Activated naive CD4-positive, alpha-beta T cell treated with anti-CD3 and anti-CD28 coated beads for 36 hours (primary cell): ENCODE measurements at regions of chr18 and their contacts with region 1.

Region 1: DNA sequence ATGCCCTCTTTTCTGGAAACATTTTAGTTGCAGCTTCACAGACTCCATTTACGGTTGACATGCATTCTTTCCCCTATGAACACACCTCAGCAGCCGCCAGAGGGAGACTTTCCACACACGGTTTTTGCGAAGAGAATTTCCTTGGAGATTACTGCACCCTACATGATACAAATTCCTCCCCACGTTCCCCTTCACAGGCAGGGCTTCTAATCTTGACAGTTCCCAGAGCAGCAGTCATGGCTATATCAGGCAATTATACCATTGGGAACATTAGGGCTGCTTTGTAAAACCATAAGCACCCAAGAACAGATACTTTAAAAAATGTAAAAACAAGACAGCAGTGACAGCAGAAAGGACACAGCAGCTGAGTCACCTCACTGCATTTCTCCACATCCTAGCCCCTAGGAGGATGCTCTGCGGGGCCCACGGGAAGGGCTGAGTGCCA is 253.8 kb downstream of the TGIF1 start:
- DNase-seq: peak; percentile 57
- H3K4me3 Mint-ChIP-seq: no peak overlapping the region
- H3K27ac Mint-ChIP-seq: no peak overlapping the region
- H3K4me1 Mint-ChIP-seq: peaks cover 3% of the 10 kb centered on the region
- H3K27me3 Mint-ChIP-seq: peaks cover 32% of the 10 kb centered on the region

Region 2: DNA sequence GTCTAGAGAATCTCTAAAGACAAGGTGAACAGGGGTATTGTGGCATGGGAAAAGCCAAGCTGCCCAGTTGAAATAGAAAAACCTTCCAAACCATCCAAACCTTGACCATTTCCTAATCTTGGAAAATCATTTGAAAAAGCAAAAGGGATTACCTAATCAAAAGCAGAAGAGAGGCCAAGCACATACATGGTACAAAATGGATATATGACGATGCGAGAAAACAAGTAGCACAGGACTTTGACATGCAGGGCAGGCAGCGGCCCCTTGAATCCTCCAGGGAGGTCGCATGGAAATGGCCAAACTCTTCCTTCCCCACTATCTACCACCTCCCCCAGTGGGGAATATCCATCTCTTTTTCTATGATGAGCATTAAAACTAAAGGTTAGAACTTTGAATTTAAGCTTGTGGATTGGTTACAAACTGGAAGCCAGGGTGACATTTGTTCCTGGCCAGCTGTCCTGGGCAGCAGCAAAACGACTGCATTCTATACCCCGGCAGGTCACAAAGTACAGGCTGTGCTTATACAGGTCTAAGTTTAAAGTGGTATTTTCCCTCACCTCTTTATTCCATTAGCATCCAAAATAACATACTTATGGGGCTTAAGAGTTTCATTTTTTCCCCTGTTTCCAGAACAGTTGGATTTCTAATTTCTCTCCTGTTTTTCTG is 508.7 kb before region 1 on chr18:
- CTCF ChIA-PET with region 1: no interaction called
- intact Hi-C with region 1: no loop called
- DNase-seq: no peak
- H3K4me3 Mint-ChIP-seq: no peak overlapping the region
- H3K27ac Mint-ChIP-seq: no peak overlapping the region
- H3K4me1 Mint-ChIP-seq: no peaks in the 10 kb centered on the region
- H3K27me3 Mint-ChIP-seq: no peaks in the 10 kb centered on the region

Region 3: DNA sequence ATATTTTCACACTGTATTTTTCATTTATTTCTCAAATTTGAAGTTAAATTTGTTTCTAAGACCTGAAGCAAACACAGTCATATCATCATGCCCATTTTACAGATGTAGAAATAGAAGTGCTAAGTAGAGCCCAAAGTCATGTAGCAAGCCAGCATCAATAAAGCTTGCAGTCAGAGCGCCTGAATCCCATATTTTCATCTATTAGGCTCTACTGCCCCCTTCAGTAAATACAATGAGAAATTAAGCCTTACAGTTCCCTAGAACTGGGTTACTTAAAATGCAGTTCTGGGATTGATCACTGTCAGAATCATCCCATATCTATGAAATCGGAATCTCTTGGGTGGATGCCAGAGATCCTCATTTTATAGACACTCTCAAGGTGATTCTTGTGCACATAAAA is 166.1 kb after region 1 on chr18:
- CTCF ChIA-PET with region 1: interaction called, 4 read pairs
- intact Hi-C with region 1: loop called (anchors 2 kb)
- DNase-seq: no peak
- H3K4me3 Mint-ChIP-seq: no peak overlapping the region
- H3K27ac Mint-ChIP-seq: no peak overlapping the region
- H3K4me1 Mint-ChIP-seq: no peaks in the 10 kb centered on the region
- H3K27me3 Mint-ChIP-seq: peaks cover 16% of the 10 kb centered on the region

Region 4: GRCh38 chr18:4068552-4069158 is 364.9 kb after region 1 on chr18:
- CTCF ChIA-PET with region 1: no interaction called
- intact Hi-C with region 1: loop called (anchors 2 kb)
- DNase-seq: peak; percentile 53
- H3K4me3 Mint-ChIP-seq: no peak overlapping the region
- H3K27ac Mint-ChIP-seq: no peak overlapping the region
- H3K4me1 Mint-ChIP-seq: no peaks in the 10 kb centered on the region
- H3K27me3 Mint-ChIP-seq: peaks cover 9% of the 10 kb centered on the region

Region 5: GRCh38 chr18:5057386-5058348 is 1353.9 kb after region 1 on chr18:
- CTCF ChIA-PET with region 1: no interaction called
- intact Hi-C with region 1: loop called (anchors 2 kb)
- DNase-seq: peak; percentile 71
- H3K4me3 Mint-ChIP-seq: no peak overlapping the region
- H3K27ac Mint-ChIP-seq: no peak overlapping the region
- H3K4me1 Mint-ChIP-seq: peaks cover 20% of the 10 kb centered on the region
- H3K27me3 Mint-ChIP-seq: peaks cover 5% of the 10 kb centered on the region